Naive thymus-derived CD4-positive, alpha-beta T cell (primary cell): ENCODE measurements at regions of chr1 and their contacts with region 1.

Region 1: DNA sequence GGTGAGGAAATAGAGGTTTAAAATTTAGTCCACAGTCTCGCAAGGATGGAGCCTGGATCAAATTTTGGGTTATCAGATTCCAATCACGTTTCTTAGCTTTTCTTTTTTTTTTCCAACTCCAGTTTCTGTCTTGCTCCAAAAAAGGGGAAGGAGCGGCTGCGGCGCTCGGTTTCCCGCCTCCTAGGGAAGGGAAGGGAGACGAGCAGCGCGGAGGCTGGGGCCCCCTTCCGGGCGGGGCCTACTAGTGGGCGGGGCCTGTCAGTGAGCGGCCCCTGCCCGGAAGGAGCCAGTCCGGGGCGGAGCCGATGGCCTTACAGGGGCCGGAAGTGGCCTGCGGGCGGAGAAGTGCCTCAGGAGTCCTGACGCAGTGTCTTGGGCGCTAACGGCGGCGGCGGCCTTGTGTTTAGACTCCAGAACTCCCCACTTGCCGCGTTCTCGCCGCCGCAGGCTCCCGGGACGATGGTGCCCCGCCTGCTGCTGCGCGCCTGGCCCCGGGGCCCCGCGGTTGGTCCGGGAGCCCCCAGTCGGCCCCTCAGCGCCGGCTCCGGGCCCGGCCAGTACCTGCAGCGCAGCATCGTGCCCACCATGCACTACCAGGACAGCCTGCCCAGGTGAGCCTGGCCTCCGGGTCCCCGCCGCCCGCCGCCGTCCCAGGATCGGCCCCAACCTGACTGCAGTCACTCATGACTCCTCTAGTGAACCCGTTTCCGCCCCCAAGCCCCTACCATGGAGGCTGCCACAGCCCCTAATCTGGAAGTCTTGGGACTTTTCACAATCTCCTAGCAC is at the start of gene CPT2:
- DNase-seq: peak; percentile 78 to 94 (median 89)
- ATAC-seq: peak; percentile 99
- H3K4me3 ChIP-seq: peak within 1 kb of the TSS; percentile 91
- H3K4me3 Mint-ChIP-seq: peak within 1 kb of the TSS; percentile 88 to 100 (median 98)
- H3K27ac ChIP-seq: peak within 1 kb of the TSS; percentile 98
- H3K27ac Mint-ChIP-seq: peak within 1 kb of the TSS; percentile 90 to 100 (median 97)
- H3K4me1 ChIP-seq: peaks cover 16 to 20% of the 10 kb centered on the region in 2 donors
- H3K4me1 Mint-ChIP-seq: peaks cover 13 to 48% (median 44%) of the 10 kb centered on the region in 7 donors
- H3K27me3 ChIP-seq: no peaks in the 10 kb centered on the region
- H3K27me3 Mint-ChIP-seq: no peaks in the 10 kb centered on the region
- total RNA-seq, gene CPT2: 8.8 to 23.0 (median 13.4) TPM

Region 2: DNA sequence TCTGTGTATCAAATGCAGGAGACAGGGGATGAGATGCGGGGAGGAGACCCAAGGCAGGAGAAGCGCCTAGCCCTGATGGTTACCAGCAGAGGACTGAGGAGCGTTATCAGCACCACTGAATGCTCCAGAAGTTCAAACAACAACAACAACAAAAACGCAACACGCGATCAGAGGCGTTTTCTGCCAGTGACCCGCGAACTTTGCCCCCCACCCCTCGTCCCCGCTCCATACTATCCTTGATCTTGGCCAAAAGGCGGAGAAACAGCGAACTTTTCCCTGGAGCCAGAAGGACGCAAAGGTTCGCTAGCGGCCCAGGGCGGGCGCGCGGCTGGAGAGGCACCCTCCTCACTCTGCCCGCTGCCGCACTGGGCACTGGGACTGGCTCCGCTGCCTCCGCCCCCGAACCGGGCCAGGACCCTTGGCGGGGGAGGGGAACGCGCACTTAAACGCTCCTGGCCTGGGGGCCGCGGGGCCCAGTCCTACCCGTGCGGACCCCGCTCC is 275.8 kb before region 1 on chr1:
- CTCF ChIA-PET with region 1: no interaction called
- POLR2A ChIA-PET with region 1: no interaction called
- intact Hi-C with region 1: loop called in 1 of 2 experiments (anchors 5 kb)
- DNase-seq: no peak
- ATAC-seq: no peak
- H3K4me3 ChIP-seq: peak overlapping the region; percentile 67
- H3K4me3 Mint-ChIP-seq: peak overlapping the region; percentile 65 to 89 (median 84)
- H3K27ac ChIP-seq: peak overlapping the region; percentile 74
- H3K27ac Mint-ChIP-seq: peak overlapping the region; percentile 51 to 86 (median 70)
- H3K4me1 ChIP-seq: peaks cover 0 to 12% of the 10 kb centered on the region in 2 donors
- H3K4me1 Mint-ChIP-seq: peaks cover 16 to 41% (median 31%) of the 10 kb centered on the region in 7 donors
- H3K27me3 ChIP-seq: no peaks in the 10 kb centered on the region
- H3K27me3 Mint-ChIP-seq: peaks cover 0 to 4% (median 0%) of the 10 kb centered on the region in 5 donors

Region 3: DNA sequence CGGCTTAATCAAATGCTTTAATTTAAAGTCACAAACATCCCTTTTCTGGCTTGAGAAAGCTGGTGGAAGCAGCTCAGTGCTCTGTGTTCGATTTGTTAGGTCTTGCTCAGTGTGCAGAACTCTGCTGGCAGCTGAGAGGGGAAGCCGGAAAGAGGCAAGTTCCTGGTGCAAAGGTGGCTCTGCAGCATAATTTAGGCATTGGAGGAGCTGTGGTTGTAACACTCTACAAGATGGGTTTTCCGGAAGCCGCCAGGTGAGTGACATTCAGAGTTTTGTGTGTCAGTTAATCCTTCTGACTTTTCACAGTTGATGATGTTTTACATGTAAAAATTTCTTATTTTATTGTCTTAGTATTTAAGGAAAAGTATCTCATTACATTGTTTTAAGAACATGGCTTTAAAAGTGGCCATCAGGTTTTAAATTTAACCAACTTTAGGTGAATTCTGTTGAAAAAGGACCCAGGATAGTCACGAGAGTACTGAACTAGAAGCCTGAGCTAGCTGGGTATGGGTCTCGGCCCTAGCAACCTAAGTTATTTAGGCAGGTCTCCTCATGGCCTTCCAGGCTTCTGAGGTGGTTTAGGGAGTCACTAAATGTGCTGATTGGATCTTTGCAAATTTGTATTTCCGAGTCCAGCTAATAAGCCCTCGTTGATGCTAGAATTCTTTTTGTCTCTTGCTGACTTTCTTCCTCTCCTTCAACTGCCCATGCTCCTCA is 181.7 kb before region 1 on chr1:
- CTCF ChIA-PET with region 1: no interaction called
- POLR2A ChIA-PET with region 1: no interaction called
- intact Hi-C with region 1: loop called (anchors 1 to 5 kb)
- DNase-seq: peak; percentile 27 to 91 (median 84)
- ATAC-seq: peak; percentile 100
- H3K4me3 ChIP-seq: peak overlapping the region; percentile 65
- H3K4me3 Mint-ChIP-seq: peak overlapping the region; percentile 81 to 96 (median 90)
- H3K27ac ChIP-seq: peak overlapping the region; percentile 57
- H3K27ac Mint-ChIP-seq: peak overlapping the region; percentile 57 to 92 (median 84)
- H3K4me1 ChIP-seq: peaks cover 14 to 16% of the 10 kb centered on the region in 2 donors
- H3K4me1 Mint-ChIP-seq: peaks cover 20 to 48% (median 40%) of the 10 kb centered on the region in 7 donors
- H3K27me3 ChIP-seq: no peaks in the 10 kb centered on the region
- H3K27me3 Mint-ChIP-seq: no peaks in the 10 kb centered on the region

Region 4: GRCh38 chr1:53220171-53220961 is 23.7 kb after region 1 on chr1 and contains the start of gene CZIB:
- CTCF ChIA-PET with region 1: no interaction called
- POLR2A ChIA-PET with region 1: interaction called, 42 read pairs
- intact Hi-C with region 1: loop called (anchors 1 kb)
- DNase-seq: peak; percentile 85 to 97 (median 92)
- ATAC-seq: peak; percentile 97
- H3K4me3 ChIP-seq: peak within 1 kb of the TSS; percentile 80
- H3K4me3 Mint-ChIP-seq: peak within 1 kb of the TSS; percentile 83 to 94 (median 92)
- H3K27ac ChIP-seq: peak within 1 kb of the TSS; percentile 99
- H3K27ac Mint-ChIP-seq: peak within 1 kb of the TSS; percentile 91 to 98 (median 96)
- H3K4me1 ChIP-seq: peaks cover 15% of the 10 kb centered on the region in 2 donors
- H3K4me1 Mint-ChIP-seq: peaks cover 15 to 31% (median 26%) of the 10 kb centered on the region in 7 donors
- H3K27me3 ChIP-seq: no peaks in the 10 kb centered on the region
- H3K27me3 Mint-ChIP-seq: no peaks in the 10 kb centered on the region
- total RNA-seq, gene CZIB: 41.9 to 94.9 (median 51.4) TPM

Region 5: GRCh38 chr1:53393325-53393792 is 196.7 kb after region 1 on chr1:
- CTCF ChIA-PET with region 1: no interaction called
- POLR2A ChIA-PET with region 1: no interaction called
- intact Hi-C with region 1: no loop called
- DNase-seq: peak; percentile 28 to 80 (median 62)
- ATAC-seq: peak; percentile 81
- H3K4me3 ChIP-seq: no peak overlapping the region
- H3K4me3 Mint-ChIP-seq: no peak overlapping the region
- H3K27ac ChIP-seq: no peak overlapping the region
- H3K27ac Mint-ChIP-seq: peak overlapping the region in 1 of 9 donors; percentile 45
- H3K4me1 ChIP-seq: no peaks in the 10 kb centered on the region
- H3K4me1 Mint-ChIP-seq: peaks cover 0 to 10% (median 0%) of the 10 kb centered on the region in 7 donors
- H3K27me3 ChIP-seq: no peaks in the 10 kb centered on the region
- H3K27me3 Mint-ChIP-seq: peaks cover 0 to 10% (median 0%) of the 10 kb centered on the region in 5 donors